SK-N-SH (cell line): ENCODE measurements at regions of chr7 and their contacts with region 1.

Region 1: GRCh38 chr7:149261829-149262617 is at the start of gene ZNF783:
- DNase-seq: peak; percentile 98
- H3K4me3 ChIP-seq: peak within 1 kb of the TSS; percentile 53 to 62
- H3K27ac ChIP-seq: peak within 1 kb of the TSS; percentile 44 to 55
- H3K4me1 ChIP-seq: peaks cover 9 to 12% of the 10 kb centered on the region in 2 experiments; a peak in 2 of 4 replicates
- H3K27me3 ChIP-seq: no peaks in the 10 kb centered on the region
- CTCF ChIP-seq: peak; percentile 76
- EP300 ChIP-seq: peak in 1 of 2 experiments; percentile 31; a peak in 1 of 4 replicates
- RAD21 ChIP-seq: peak; percentile 57
- polyA plus RNA-seq, gene ZNF783: 12.5 and 16.4 TPM in 2 replicates

Region 2: DNA sequence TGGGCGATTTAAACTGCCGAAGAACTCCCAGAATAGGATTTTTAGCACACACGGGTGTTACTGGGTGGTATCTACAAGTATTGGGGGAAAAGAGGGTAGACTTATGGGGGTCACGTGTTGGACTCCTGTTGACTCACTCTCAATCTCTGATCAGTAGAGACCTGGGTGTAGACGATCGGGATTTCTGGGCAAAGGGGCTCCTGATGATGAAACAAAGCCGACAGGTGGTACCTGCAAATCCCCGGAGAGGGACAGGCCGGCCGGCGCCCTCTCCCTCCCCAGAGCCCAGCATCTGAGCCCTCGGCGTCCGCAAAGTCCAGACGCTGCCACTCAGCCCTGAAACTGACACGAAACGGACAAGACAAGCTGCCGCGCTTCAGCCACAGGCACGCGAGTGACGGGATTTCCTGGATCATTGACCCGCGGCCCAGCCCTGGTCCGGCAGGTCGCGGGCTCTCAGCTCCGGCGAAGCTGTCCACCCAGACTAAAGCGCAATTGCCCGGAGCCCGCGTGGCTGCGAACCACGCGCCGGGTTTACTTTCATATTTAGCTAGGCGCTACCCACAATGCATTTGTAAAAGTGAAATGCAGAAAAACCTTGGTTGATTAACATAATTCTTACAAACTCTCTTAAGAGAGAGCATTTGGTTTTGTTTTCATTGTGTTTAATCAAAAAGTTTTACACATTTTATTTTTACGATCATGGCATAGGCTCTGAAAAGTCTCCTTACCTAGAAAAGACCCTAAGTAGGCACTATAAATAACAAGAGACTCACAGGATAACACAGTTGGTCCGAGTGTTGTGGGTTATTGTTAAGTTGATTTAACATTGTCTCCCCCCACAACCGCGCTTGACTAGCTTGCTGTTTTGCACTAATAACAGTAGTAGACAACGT is 321.1 kb before region 1 on chr7:
- CTCF ChIA-PET with region 1: no interaction called
- POLR2A ChIA-PET with region 1: no interaction called
- DNase-seq: peak; percentile 88
- H3K4me3 ChIP-seq: peak overlapping the region; percentile 65 to 83
- H3K27ac ChIP-seq: peak overlapping the region; percentile 76 to 91
- H3K4me1 ChIP-seq: peaks cover 0 to 6% of the 10 kb centered on the region in 2 experiments; a peak in 2 of 4 replicates
- H3K27me3 ChIP-seq: no peaks in the 10 kb centered on the region
- CTCF ChIP-seq: no peak
- EP300 ChIP-seq: peak in 1 of 2 experiments; percentile 59; a peak in 1 of 4 replicates
- RAD21 ChIP-seq: 0 out of 2 replicates have a peak, but pooled peaks have one; percentile 10

Region 3: DNA sequence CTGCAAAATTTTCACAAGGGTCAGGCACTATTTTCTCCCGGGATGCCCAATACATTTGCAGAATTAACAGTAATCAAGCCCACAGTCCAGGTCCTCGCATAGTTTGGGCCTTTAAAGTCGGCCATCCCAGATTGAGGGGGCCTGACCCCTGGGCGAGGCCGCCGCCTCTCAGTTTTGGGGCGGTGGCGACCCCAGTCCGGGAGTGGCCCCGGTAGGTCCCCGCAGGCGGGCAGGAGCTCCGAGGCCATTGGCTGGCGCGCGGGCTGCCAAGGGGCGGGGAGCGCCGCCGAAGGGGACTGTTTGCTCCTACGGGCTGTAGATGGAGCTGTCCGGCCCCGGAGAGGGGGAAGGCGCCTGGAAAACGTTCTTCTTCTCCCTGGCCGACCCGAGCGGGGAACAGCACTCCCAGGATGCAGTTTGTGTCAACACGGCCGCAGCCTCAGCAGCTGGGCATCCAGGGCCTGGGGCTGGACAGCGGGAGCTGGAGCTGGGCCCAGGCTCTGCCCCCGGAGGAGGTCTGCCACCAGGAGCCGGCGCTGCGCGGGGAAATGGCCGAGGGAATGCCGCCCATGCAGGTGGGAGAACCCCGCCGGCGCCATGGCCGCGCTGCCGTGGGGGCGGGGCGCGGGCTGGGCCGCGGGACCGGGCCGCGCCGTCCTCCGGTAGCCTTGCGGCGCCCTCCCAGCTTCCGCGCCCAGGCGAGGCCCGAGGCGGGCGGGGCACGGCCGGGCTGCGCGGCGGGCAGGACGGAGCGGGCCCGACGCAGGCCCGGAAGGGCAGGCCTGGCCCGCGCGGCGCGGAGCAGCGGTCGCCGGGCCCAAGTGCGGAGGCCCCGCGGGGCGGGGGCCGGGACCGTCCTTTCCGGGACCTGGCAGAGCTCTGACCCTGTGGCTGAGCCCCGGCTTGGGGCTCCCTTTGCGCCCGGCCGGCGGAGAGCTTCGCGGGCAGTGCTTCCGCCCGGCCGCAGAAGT is 66.6 kb before region 1 on chr7 and contains the start of gene ZNF282:
- CTCF ChIA-PET with region 1: interaction called, 14 read pairs
- POLR2A ChIA-PET with region 1: no interaction called
- DNase-seq: peak; percentile 100
- H3K4me3 ChIP-seq: peak within 1 kb of the TSS; percentile 90 to 91
- H3K27ac ChIP-seq: peak within 1 kb of the TSS; percentile 76 to 93
- H3K4me1 ChIP-seq: peaks cover 13 to 15% of the 10 kb centered on the region in 2 experiments; a peak in 2 of 4 replicates
- H3K27me3 ChIP-seq: no peaks in the 10 kb centered on the region; the same call in 1 of the 2 replicates
- CTCF ChIP-seq: peak; percentile 77
- EP300 ChIP-seq: peak in 1 of 2 experiments; percentile 65; a peak in 1 of 4 replicates
- RAD21 ChIP-seq: peak; percentile 56
- polyA plus RNA-seq, gene ZNF282: 15.0 and 17.9 TPM in 2 replicates

Region 4: DNA sequence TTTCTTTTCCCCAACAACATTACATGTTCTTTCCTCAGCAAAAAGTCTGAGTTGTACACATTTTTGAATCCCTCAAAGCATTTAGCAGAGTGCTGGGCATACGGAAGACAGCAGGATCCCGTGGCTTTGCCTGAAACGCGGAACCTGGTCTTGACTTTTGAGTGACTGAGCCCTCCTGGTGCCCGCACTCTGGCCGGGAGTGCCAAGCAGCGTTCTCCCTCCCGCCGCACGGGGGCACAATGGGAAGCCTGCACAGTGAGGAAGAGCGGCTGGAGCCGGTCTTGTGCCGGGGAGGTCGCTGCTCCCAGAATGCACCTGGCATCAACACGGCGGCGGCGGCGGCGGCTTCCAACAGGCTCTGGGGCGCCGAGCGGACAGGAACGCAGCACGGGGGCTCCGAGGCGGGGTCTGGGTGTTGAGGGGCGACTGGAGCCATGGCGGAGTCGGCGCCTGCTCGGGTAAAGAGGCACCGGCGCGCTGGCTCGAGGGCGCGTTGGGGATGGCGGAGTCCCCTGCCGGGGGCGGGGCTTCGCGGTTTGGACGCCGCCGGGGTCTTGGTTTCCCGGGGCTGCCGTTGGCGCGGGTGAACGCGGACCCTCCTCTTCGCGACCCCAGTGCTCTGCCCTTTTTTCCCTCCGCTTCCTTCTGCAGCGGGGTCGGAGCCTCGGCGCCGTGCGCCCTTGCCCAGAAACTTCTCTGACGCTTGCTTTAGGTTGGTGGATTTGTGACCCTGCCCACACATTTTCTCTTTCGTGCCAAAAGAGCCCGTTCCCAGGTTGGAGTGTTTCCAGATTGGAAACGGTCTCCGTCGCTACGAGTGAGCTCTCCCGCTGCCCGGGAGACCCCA is 22.5 kb before region 1 on chr7 and contains the start of gene ZNF212:
- CTCF ChIA-PET with region 1: interaction called, 25 read pairs
- POLR2A ChIA-PET with region 1: no interaction called
- DNase-seq: peak; percentile 100
- H3K4me3 ChIP-seq: peak within 1 kb of the TSS; percentile 82 to 96
- H3K27ac ChIP-seq: peak within 1 kb of the TSS; percentile 50 to 72; a peak in 3 of 4 replicates
- H3K4me1 ChIP-seq: peaks cover 1 to 13% of the 10 kb centered on the region in 2 experiments; a peak in 3 of 4 replicates
- H3K27me3 ChIP-seq: no peaks in the 10 kb centered on the region
- CTCF ChIP-seq: peak; percentile 92
- EP300 ChIP-seq: peak in 1 of 2 experiments; percentile 78; a peak in 1 of 4 replicates
- RAD21 ChIP-seq: peak; percentile 51
- polyA plus RNA-seq, gene ZNF212: 9.3 and 11.5 TPM in 2 replicates

Region 5: GRCh38 chr7:149245244-149245643 is 16.8 kb before region 1 on chr7:
- CTCF ChIA-PET with region 1: interaction called, 76 read pairs
- POLR2A ChIA-PET with region 1: no interaction called
- DNase-seq: no peak
- H3K4me3 ChIP-seq: no peak overlapping the region
- H3K27ac ChIP-seq: no peak overlapping the region
- H3K4me1 ChIP-seq: peaks cover 0 to 8% of the 10 kb centered on the region in 2 experiments; a peak in 2 of 4 replicates
- H3K27me3 ChIP-seq: no peaks in the 10 kb centered on the region
- CTCF ChIP-seq: no peak
- EP300 ChIP-seq: no peak
- RAD21 ChIP-seq: no peak

Region 6: DNA sequence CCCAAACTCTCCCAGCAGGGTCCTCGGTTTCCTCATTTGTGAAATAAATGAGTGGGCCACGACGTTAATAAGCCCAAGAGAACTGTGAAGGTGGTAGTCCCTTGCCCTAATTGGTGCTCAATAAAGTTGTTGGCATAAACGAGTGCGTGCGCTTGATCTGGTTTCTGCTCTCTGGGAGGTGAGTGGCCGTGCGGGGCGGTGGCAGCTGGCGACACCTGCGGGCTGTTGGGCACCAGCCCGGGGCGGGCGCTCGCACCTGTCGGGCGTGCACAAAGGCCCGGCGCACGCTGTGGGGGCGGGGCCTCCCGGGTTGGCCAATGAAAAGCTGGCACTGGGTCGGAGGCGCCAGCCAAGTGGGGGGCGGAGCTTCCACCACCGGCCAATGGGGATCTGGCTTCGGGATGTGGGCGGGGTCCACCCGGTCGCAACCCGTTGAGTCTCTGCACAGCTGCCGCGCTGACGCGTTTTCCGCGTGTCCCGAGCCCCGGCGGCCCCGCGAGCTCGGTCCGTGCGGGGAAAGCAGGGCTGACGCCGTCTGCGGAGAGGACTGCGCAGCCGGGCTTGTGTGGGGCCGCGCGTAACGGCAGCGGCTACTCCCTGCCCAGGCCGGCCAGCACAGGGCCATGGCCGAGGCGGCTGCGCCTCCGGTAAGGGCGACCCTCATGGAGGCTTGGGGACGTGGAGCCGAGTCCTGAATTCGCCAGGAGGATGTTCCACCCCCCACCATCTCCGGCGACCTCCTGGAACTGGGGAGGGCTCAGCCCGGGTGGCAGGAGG is 23.0 kb after region 1 on chr7:
- CTCF ChIA-PET with region 1: interaction called, 20 read pairs
- POLR2A ChIA-PET with region 1: interaction called, 6 read pairs
- DNase-seq: peak; percentile 100
- H3K4me3 ChIP-seq: peak overlapping the region; percentile 74 to 78
- H3K27ac ChIP-seq: no peak overlapping the region
- H3K4me1 ChIP-seq: peaks cover 0 to 16% of the 10 kb centered on the region in 2 experiments; a peak in 1 of 4 replicates
- H3K27me3 ChIP-seq: no peaks in the 10 kb centered on the region
- CTCF ChIP-seq: no peak
- EP300 ChIP-seq: no peak
- RAD21 ChIP-seq: no peak